PC-3 (cell line): ENCODE measurements at regions of chr6 and their contacts with region 1.

Region 1: DNA sequence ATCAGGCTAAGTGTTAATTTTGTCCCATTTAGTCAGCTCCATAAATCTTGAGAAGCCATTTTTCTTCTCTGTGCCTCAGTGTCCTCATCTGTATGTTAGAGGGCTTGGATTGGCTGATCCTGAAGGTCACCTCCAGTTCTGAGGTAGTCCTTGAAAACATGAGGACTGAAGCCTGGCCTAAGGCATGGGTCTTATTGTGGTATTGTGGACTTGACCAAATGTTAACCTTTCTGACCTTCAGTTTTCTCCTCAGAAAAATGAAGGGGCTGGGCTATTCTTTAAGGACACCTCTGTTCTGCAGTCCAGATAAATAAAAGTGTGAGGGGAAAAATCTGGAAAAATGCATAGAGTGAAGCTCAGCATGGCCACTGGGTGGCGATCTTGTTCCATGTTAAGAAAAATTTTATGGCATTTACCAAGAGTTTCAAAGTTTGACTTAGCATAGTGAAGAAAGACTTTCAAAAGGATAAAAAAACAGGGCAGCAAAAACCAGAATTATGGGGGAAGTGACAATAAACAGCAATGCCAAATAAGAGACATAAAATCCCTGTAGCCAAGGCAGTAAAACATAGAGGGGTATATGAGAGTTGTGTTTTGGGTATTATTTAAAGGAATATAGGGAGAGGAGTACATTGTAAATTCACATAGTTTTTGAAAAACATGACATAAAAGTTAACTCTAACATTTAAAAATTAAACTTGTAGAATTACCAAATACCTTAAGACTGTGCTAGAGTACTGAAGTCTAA is 13.2 kb upstream of the TFB1M start:
- DNase-seq: peak; percentile 65
- ATAC-seq: peak; percentile 63
- H3K4me3 ChIP-seq: no peak overlapping the region
- H3K27ac ChIP-seq: peak overlapping the region; percentile 33
- H3K4me1 ChIP-seq: peaks cover 28% of the 10 kb centered on the region
- H3K27me3 ChIP-seq: no peaks in the 10 kb centered on the region
- CTCF ChIP-seq: peak; percentile 82

Region 2: DNA sequence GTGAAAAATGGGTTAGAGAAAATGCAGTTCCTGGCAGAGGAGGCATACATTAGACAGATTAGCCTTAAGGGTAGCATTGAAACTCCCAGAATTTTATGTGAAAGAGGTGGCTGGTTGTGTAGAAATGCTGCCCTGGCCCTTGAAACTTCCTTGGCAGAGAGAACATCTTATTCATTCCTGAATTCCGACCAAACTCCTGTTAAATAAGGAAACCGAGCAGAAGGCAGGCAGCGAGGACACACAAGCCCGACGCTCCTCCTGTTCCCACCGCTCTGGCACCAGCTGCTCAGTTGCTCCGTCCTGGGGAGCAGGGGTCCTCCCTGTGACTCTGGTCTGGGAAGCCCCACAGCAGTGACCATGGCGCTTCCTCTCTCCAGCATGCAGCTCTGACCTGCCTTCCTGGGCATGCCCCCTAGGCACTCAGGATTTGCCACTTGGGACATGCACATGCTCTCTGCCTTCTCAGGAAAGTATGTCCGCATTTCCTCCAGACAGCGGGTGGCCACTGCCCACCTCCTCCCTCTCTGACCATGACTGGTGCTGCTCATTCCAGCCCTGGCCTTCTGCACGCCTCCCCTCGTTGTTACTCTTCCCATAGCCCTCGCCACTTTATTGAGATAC is 98.8 kb before region 1 on chr6:
- CTCF ChIA-PET with region 1: no interaction called
- POLR2A ChIA-PET with region 1: no interaction called
- intact Hi-C with region 1: no loop called
- DNase-seq: no peak
- ATAC-seq: no peak
- H3K4me3 ChIP-seq: no peak overlapping the region
- H3K27ac ChIP-seq: no peak overlapping the region
- H3K4me1 ChIP-seq: peaks cover 9% of the 10 kb centered on the region
- H3K27me3 ChIP-seq: no peaks in the 10 kb centered on the region
- CTCF ChIP-seq: no peak

Region 3: GRCh38 chr6:155314092-155314772 is 13.3 kb before region 1 on chr6 and contains the start of gene TFB1M:
- CTCF ChIA-PET with region 1: no interaction called
- POLR2A ChIA-PET with region 1: no interaction called
- intact Hi-C with region 1: no loop called
- DNase-seq: peak; percentile 98
- ATAC-seq: peak; percentile 92
- H3K4me3 ChIP-seq: peak within 1 kb of the TSS; percentile 89
- H3K27ac ChIP-seq: peak within 1 kb of the TSS; percentile 84
- H3K4me1 ChIP-seq: peaks cover 38% of the 10 kb centered on the region
- H3K27me3 ChIP-seq: no peaks in the 10 kb centered on the region
- CTCF ChIP-seq: no peak
- total RNA-seq, gene TFB1M: 23.1 and 25.6 TPM in 2 replicates

Region 4: GRCh38 chr6:155472886-155473285 is 145.4 kb after region 1 on chr6:
- CTCF ChIA-PET with region 1: no interaction called
- POLR2A ChIA-PET with region 1: no interaction called
- intact Hi-C with region 1: no loop called
- DNase-seq: no peak
- ATAC-seq: no peak
- H3K4me3 ChIP-seq: no peak overlapping the region
- H3K27ac ChIP-seq: no peak overlapping the region
- H3K4me1 ChIP-seq: no peaks in the 10 kb centered on the region
- H3K27me3 ChIP-seq: no peaks in the 10 kb centered on the region
- CTCF ChIP-seq: no peak

Region 5: GRCh38 chr6:155765275-155766194 is 438.0 kb after region 1 on chr6:
- CTCF ChIA-PET with region 1: no interaction called
- POLR2A ChIA-PET with region 1: no interaction called
- intact Hi-C with region 1: loop called (anchors 1 kb)
- DNase-seq: peak; percentile 35
- ATAC-seq: no peak; the same call in 1 of the 2 replicates
- H3K4me3 ChIP-seq: no peak overlapping the region
- H3K27ac ChIP-seq: 0 out of 2 replicates have a peak overlapping the region, but pooled peaks have one; percentile 8
- H3K4me1 ChIP-seq: peaks cover 11% of the 10 kb centered on the region; the same call in 1 of the 2 replicates
- H3K27me3 ChIP-seq: no peaks in the 10 kb centered on the region
- CTCF ChIP-seq: peak; percentile 24; the same call in 1 of the 2 replicates